ENCODE measurements at regions of chr9 and their contacts with region 1.

Region 1: GRCh38 chr9:109903515-109904138 is 123.6 kb downstream of the PALM2AKAP2 start:
- DNase-seq: no peak
- H3K4me3 ChIP-seq: no peak overlapping the region
- H3K27ac ChIP-seq: no peak overlapping the region
- H3K4me1 ChIP-seq: peaks cover 7 to 34% (median 14%) of the 10 kb centered on the region in 4 donors
- H3K27me3 ChIP-seq: no peaks in the 10 kb centered on the region
- CTCF ChIP-seq: peak; percentile 76 to 79 (median 78)
- EP300 ChIP-seq: no peak
- POLR2A ChIP-seq: no peak

Region 2: GRCh38 chr9:110058304-110058953 is 154.8 kb after region 1 on chr9:
- intact Hi-C with region 1: loop called (anchors 2 kb)
- DNase-seq: no peak
- H3K4me3 ChIP-seq: no peak overlapping the region
- H3K27ac ChIP-seq: no peak overlapping the region
- H3K4me1 ChIP-seq: peaks cover 0 to 39% (median 13%) of the 10 kb centered on the region in 4 donors
- H3K27me3 ChIP-seq: no peaks in the 10 kb centered on the region
- CTCF ChIP-seq: peak; percentile 53 to 56 (median 53)
- EP300 ChIP-seq: no peak
- POLR2A ChIP-seq: no peak

Region 3: DNA sequence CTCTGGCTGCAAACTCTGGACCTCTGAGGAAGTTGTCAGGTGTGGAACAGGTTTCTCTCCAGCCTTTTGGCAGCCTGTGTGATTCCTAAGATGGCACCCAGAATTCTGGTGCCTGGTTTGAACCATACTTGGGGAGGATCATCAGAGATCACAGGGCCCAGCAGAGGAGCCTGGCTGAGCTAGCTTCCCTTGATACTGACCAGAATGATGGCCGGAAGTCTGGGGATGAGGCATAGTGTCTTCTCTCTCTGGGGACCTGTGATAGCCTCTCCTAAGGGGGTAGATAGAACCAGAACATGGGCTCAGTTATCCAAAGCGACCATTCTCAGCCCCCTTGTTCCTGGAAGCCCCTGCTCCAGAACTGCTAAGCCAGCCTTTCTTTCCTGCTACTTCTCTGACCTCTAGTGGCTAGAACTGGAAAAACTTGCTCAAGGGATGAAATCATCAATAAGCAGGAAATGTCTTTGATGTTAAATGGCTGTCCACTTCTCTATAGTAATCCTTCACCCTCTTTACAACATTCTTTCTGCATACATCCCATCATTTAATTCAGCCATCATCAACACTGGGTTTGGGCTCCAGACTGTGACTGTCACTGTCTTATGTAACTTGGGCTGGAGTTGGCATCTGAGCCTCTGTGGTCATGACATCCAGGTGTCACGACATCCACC is 249.2 kb after region 1 on chr9:
- intact Hi-C with region 1: loop called (anchors 2 kb)
- DNase-seq: no peak
- H3K4me3 ChIP-seq: no peak overlapping the region
- H3K27ac ChIP-seq: peak overlapping the region in 2 of 4 donors; percentile 24 to 38
- H3K4me1 ChIP-seq: peaks cover 60 to 76% (median 69%) of the 10 kb centered on the region in 4 donors
- H3K27me3 ChIP-seq: no peaks in the 10 kb centered on the region
- CTCF ChIP-seq: peak; percentile 64 to 76 (median 69)
- EP300 ChIP-seq: no peak
- POLR2A ChIP-seq: no peak

Region 4: GRCh38 chr9:110217656-110218099 is 314.1 kb after region 1 on chr9:
- intact Hi-C with region 1: loop called (anchors 5 kb)
- DNase-seq: no peak
- H3K4me3 ChIP-seq: peak overlapping the region in 1 of 4 donors; percentile 14
- H3K27ac ChIP-seq: no peak overlapping the region
- H3K4me1 ChIP-seq: peaks cover 0 to 4% (median 0%) of the 10 kb centered on the region in 4 donors
- H3K27me3 ChIP-seq: no peaks in the 10 kb centered on the region
- CTCF ChIP-seq: peak; percentile 74 to 79 (median 78)
- EP300 ChIP-seq: no peak
- POLR2A ChIP-seq: no peak

Measured in esophagus muscularis mucosa (tissue), 4 donors.